Activated CD4-positive, alpha-beta T cell treated with anti-CD3 and anti-CD28 coated beads for 36 hours (primary cell): ENCODE measurements at regions of chr7 and their contacts with region 1.

Region 1: GRCh38 chr7:74254129-74254857 is at the start of gene RFC2:
- DNase-seq: peak; percentile 98
- ATAC-seq: peak; percentile 96
- H3K4me3 Mint-ChIP-seq: peak within 1 kb of the TSS; percentile 98
- H3K27ac Mint-ChIP-seq: peak within 1 kb of the TSS; percentile 96
- H3K4me1 Mint-ChIP-seq: peaks cover 18% of the 10 kb centered on the region
- H3K27me3 Mint-ChIP-seq: no peaks in the 10 kb centered on the region
- total RNA-seq, gene RFC2: 84.9 to 123 TPM

Region 2: DNA sequence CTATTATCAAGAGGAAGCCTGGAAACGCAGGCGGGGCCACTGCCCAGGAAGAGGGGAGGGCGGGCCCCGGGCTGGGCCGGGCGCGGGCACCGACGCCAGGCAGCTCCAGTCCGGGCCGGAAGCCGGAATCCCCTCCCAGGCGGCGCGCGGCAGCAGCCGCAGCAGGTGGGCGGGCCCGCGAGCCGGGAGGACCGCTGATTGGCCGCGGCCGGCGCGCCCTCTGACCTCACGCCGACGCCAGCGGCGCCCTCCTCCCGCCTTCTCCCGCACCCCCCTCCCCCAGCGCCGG is 697.2 kb before region 1 on chr7:
- CTCF ChIA-PET with region 1: no interaction called
- POLR2A ChIA-PET with region 1: no interaction called
- intact Hi-C with region 1: loop called in 1 of 2 experiments (anchors 1 kb)
- DNase-seq: peak; percentile 95
- ATAC-seq: peak; percentile 92
- H3K4me3 Mint-ChIP-seq: peak overlapping the region; percentile 93
- H3K27ac Mint-ChIP-seq: peak overlapping the region; percentile 91
- H3K4me1 Mint-ChIP-seq: peaks cover 35% of the 10 kb centered on the region
- H3K27me3 Mint-ChIP-seq: no peaks in the 10 kb centered on the region

Region 3: GRCh38 chr7:74083117-74083876 is 171.0 kb before region 1 on chr7 and contains the start of gene LIMK1:
- CTCF ChIA-PET with region 1: no interaction called
- POLR2A ChIA-PET with region 1: no interaction called
- intact Hi-C with region 1: loop called in 1 of 2 experiments (anchors 1 kb)
- DNase-seq: peak; percentile 90
- ATAC-seq: peak; percentile 89
- H3K4me3 Mint-ChIP-seq: peak within 1 kb of the TSS; percentile 79
- H3K27ac Mint-ChIP-seq: peak within 1 kb of the TSS; percentile 77
- H3K4me1 Mint-ChIP-seq: peaks cover 5% of the 10 kb centered on the region
- H3K27me3 Mint-ChIP-seq: no peaks in the 10 kb centered on the region
- total RNA-seq, gene LIMK1: 12.5 to 14.8 TPM

Region 4: DNA sequence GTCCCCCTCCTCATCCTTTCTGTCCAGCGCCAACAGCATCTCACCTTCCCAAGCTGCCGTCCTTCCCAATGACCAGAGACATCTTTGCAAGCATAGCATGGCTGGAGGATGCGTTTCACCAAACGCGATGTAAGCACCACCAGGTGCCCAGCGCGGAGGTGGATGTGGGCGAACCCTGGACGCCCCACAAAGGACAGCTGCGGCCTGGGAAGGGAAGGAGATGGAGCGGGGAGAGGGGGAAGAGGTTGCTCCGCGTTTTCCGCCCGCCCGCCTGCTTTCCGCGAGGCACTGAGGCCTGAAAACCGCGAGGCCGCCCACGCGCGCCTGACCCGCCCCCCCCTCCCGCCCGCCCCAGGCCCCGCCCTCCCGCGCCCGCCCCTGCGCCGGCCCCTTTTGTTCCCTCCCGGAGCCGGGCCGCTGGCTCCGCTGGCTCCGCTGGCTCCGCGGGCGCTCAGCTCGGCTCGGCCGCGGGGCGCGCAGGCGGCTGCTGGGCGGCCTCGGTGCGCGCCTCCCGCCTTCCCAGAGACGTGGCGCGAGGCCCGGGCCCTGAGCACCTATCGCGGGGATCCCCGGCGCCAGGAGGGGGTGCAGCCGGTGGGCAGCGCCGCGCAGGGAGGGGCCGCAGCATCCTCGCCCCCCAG is 34.8 kb after region 1 on chr7 and contains the start of gene CLIP2:
- CTCF ChIA-PET with region 1: interaction called, 4 read pairs
- POLR2A ChIA-PET with region 1: no interaction called
- intact Hi-C with region 1: loop called (anchors 1 to 5 kb)
- DNase-seq: peak; percentile 87
- ATAC-seq: peak; percentile 93
- H3K4me3 Mint-ChIP-seq: peak within 1 kb of the TSS; percentile 73
- H3K27ac Mint-ChIP-seq: peak within 1 kb of the TSS; percentile 60
- H3K4me1 Mint-ChIP-seq: peaks cover 16% of the 10 kb centered on the region
- H3K27me3 Mint-ChIP-seq: peaks cover 15% of the 10 kb centered on the region
- total RNA-seq, gene CLIP2: 1.4 to 1.8 TPM

Region 5: DNA sequence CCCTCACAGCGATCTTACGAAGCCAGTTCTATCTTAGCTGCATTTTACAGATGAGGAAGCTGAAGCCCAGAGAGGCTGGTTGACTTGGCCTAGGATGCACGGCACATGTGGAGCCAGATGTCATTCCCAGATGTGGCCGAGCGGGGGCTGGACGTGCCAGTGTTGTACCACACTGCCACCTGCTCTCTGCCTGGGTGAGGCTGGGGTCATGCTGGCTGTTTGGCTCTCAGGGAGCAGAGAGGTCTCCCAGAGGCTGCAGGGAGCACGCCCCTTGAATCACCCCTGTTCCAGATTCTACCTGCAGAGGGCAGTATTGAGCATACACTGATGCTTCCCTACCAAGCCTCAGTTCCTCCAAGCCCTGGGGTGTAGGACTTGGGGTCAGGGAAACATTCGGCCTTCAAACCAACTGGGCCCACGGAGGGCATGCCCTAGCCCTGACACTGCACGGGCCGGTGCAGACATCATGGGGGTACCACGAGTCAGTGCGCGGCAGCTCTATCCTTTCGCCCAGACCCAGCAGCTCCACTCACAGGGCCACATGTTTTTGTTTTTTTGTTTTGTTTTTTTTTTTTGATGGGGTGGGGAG is 195.6 kb after region 1 on chr7:
- CTCF ChIA-PET with region 1: no interaction called
- POLR2A ChIA-PET with region 1: no interaction called
- intact Hi-C with region 1: loop called in 1 of 2 experiments (anchors 1 kb)
- DNase-seq: peak; percentile 83
- ATAC-seq: peak; percentile 27
- H3K4me3 Mint-ChIP-seq: no peak overlapping the region
- H3K27ac Mint-ChIP-seq: no peak overlapping the region
- H3K4me1 Mint-ChIP-seq: peaks cover 14% of the 10 kb centered on the region
- H3K27me3 Mint-ChIP-seq: no peaks in the 10 kb centered on the region

Region 6: DNA sequence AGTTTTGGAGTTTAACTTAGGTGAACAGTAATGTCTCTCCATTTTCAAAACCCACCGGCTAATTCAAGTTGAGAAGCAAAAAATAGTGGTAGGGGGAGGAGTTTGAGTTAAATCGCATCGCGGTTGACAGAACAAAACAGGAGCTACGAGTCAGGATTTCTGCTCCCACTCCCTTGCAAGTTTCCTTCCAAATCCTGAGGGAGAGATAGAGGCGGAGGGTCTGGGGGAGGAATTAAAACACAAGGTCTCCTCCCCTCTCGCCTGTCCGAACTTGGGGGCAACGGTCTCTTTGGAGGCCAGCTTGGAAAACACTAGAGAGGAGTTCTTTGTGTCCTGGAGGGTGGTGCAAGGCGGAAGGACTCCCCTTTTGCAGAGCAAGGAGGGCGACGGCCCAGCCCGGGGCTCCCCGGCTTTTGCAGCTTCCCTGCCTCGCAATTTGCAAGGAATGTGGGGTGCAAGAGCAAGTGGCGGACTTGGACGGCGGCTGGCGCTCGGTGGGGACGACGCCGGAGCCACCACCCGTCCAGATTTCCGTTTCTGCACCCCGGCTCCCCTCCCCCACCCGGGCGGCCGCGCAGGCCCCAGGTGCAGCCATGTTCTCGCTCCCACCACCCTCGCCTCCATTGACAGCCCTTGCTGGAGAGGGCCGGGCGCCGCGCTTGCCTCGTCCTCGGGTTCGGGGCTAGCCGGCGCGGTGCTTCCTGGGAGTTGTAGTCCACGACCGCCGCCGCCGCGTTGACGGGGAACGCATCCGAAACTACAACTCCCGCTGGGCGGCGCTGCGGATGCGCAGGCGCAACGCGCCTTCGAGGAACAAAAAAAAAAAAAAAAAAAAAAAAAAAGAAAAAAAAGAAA is 402.8 kb after region 1 on chr7:
- CTCF ChIA-PET with region 1: no interaction called
- POLR2A ChIA-PET with region 1: no interaction called
- intact Hi-C with region 1: loop called in 1 of 2 experiments (anchors 1 kb)
- DNase-seq: peak; percentile 100
- ATAC-seq: peak; percentile 82
- H3K4me3 Mint-ChIP-seq: peak overlapping the region; percentile 76
- H3K27ac Mint-ChIP-seq: peak overlapping the region; percentile 92
- H3K4me1 Mint-ChIP-seq: peaks cover 52% of the 10 kb centered on the region
- H3K27me3 Mint-ChIP-seq: no peaks in the 10 kb centered on the region